ENCODE measurements at regions of chr16 and their contacts with region 1.

Region 1: DNA sequence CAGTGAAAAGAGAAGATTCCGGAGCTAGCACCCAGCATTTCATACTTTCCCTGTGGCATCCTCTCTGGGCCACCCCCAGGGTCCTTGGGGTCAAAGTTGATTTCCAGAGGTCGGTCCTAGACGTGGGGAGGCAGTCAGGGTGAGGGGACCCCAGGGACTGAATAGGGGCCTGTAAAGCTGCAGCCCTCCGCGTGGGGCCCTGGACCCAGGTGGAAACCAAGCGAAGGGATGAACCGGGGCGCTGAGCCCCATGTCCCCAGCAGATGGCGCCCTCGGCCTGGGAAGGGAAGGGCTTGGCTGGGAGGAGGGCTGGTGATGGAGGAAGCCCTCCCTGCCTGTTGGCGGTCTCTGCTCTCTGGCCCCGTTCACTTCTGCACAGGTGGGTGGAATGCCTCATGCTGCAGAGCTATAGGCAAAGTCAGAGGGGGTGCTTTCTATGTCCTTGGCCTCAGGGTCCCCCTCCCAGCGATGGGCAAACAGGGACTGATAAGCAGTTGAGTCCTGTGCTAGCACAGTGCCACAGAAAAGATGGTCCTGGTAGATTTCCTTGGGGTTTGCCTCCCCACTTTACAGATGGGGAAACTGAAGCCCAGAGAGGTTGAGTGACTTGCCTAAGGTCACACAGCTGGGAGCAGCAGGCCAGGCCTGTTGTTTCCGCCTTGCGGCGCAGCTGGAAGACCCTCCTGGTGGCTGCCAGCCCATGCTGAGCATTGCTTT is 163.4 kb upstream of the CIBAR2 start:
- DNase-seq: peak; percentile 51
- H3K4me3 ChIP-seq: no peak overlapping the region
- H3K27ac ChIP-seq: no peak overlapping the region
- H3K4me1 ChIP-seq: no peaks in the 10 kb centered on the region
- H3K27me3 ChIP-seq: no peaks in the 10 kb centered on the region
- CTCF ChIP-seq: peak; percentile 81 to 98
- POLR2A ChIP-seq: no peak

Region 2: GRCh38 chr16:85245307-85246172 is 30.2 kb before region 1 on chr16:
- CTCF ChIA-PET with region 1: interaction called, 11 read pairs
- POLR2A ChIA-PET with region 1: no interaction called
- dilution Hi-C with region 1: no loop called
- intact Hi-C with region 1: loop called (anchors 2 kb)
- DNase-seq: peak; percentile 53
- H3K4me3 ChIP-seq: no peak overlapping the region
- H3K27ac ChIP-seq: no peak overlapping the region
- H3K4me1 ChIP-seq: no peaks in the 10 kb centered on the region
- H3K27me3 ChIP-seq: no peaks in the 10 kb centered on the region
- CTCF ChIP-seq: peak; percentile 83 to 92
- POLR2A ChIP-seq: no peak

Region 3: GRCh38 chr16:85253084-85253941 is 22.4 kb before region 1 on chr16:
- CTCF ChIA-PET with region 1: interaction called, 27 read pairs
- POLR2A ChIA-PET with region 1: interaction called, 3 read pairs
- dilution Hi-C with region 1: no loop called
- intact Hi-C with region 1: no loop called
- DNase-seq: peak; percentile 28
- H3K4me3 ChIP-seq: no peak overlapping the region
- H3K27ac ChIP-seq: no peak overlapping the region
- H3K4me1 ChIP-seq: no peaks in the 10 kb centered on the region
- H3K27me3 ChIP-seq: no peaks in the 10 kb centered on the region
- CTCF ChIP-seq: peak; percentile 92 to 97
- POLR2A ChIP-seq: no peak

Region 4: DNA sequence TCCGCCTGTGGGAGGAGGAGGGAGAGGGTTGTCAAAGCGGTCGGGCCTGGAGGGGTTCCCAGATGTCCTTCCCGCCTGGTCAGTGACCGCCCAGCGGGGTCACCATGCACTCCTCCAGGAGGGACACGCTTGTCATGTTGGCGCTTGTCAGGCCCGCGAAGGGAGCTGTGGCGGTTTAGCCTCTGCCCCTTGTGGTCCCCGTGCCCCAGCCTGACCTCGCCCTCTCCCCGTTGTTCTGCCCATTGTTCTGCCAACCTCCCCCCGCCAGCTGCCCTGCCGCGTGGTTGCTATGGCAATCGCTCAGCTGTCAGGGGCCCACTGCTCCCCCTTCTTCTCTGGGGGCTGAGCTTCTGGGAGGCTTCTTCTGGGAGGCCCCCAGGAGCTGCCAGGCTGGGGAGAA is 17.1 kb before region 1 on chr16:
- CTCF ChIA-PET with region 1: interaction called, 27 read pairs
- POLR2A ChIA-PET with region 1: no interaction called
- dilution Hi-C with region 1: no loop called
- intact Hi-C with region 1: no loop called
- DNase-seq: no peak
- H3K4me3 ChIP-seq: no peak overlapping the region
- H3K27ac ChIP-seq: no peak overlapping the region
- H3K4me1 ChIP-seq: no peaks in the 10 kb centered on the region
- H3K27me3 ChIP-seq: no peaks in the 10 kb centered on the region
- CTCF ChIP-seq: no peak
- POLR2A ChIP-seq: no peak

Region 5: GRCh38 chr16:85296859-85297660 is 21.4 kb after region 1 on chr16:
- CTCF ChIA-PET with region 1: interaction called, 10 read pairs
- POLR2A ChIA-PET with region 1: no interaction called
- dilution Hi-C with region 1: no loop called
- intact Hi-C with region 1: no loop called
- DNase-seq: peak; percentile 17
- H3K4me3 ChIP-seq: no peak overlapping the region
- H3K27ac ChIP-seq: no peak overlapping the region
- H3K4me1 ChIP-seq: no peaks in the 10 kb centered on the region
- H3K27me3 ChIP-seq: no peaks in the 10 kb centered on the region
- CTCF ChIP-seq: peak; percentile 56 to 82
- POLR2A ChIP-seq: no peak

Region 6: GRCh38 chr16:85305996-85306792 is 30.5 kb after region 1 on chr16:
- CTCF ChIA-PET with region 1: interaction called, 15 read pairs
- POLR2A ChIA-PET with region 1: no interaction called
- dilution Hi-C with region 1: no loop called
- intact Hi-C with region 1: no loop called
- DNase-seq: peak; percentile 92
- H3K4me3 ChIP-seq: no peak overlapping the region
- H3K27ac ChIP-seq: no peak overlapping the region
- H3K4me1 ChIP-seq: peaks cover 14% of the 10 kb centered on the region
- H3K27me3 ChIP-seq: no peaks in the 10 kb centered on the region
- CTCF ChIP-seq: no peak
- POLR2A ChIP-seq: no peak

Region 7: DNA sequence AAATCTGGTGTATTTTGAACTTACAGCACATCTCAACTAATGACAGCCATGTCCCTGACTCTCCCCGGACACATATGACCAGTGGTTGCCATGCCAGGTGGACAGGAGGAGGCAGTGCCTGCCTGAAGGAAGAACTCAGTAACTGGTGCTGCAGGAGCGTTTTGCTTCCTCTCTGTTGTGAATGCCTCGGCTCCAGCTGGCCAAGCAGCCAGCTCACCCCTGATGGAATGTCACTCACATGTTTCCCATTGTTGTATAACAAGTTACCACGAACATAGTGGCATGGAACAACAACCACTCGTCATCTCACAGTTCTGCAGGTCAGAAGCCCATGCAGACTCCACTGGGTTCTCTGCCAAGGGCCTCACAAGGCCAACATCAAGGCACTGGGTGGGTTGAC is 603.2 kb after region 1 on chr16:
- CTCF ChIA-PET with region 1: no interaction called
- POLR2A ChIA-PET with region 1: no interaction called
- dilution Hi-C with region 1: no loop called
- intact Hi-C with region 1: no loop called
- DNase-seq: peak; percentile 92
- H3K4me3 ChIP-seq: no peak overlapping the region
- H3K27ac ChIP-seq: no peak overlapping the region
- H3K4me1 ChIP-seq: peaks cover 3% of the 10 kb centered on the region
- H3K27me3 ChIP-seq: peaks cover 3 to 13% of the 10 kb centered on the region in 2 experiments
- CTCF ChIP-seq: peak; percentile 5 to 25
- POLR2A ChIP-seq: no peak

Measured in endothelial cell of umbilical vein (primary cell).